Right cardiac atrium (tissue), 5 donors: ENCODE measurements at regions of chr10 and their contacts with region 1.

Region 1: GRCh38 chr10:13717931-13718772 is 131.4 kb downstream of the PRPF18 start:
- DNase-seq: peak; percentile 83 to 93 (median 92)
- ATAC-seq: peak; percentile 80 to 88
- H3K4me3 ChIP-seq: no peak overlapping the region
- H3K27ac ChIP-seq: peak overlapping the region; percentile 28
- H3K4me1 ChIP-seq: peaks cover 8% of the 10 kb centered on the region
- H3K27me3 ChIP-seq: no peaks in the 10 kb centered on the region

Region 2: GRCh38 chr10:13769955-13770354 is 51.8 kb after region 1 on chr10:
- intact Hi-C with region 1: loop called in 1 of 4 experiments (anchors 5 kb)
- DNase-seq: no peak
- ATAC-seq: no peak
- H3K4me3 ChIP-seq: no peak overlapping the region
- H3K27ac ChIP-seq: no peak overlapping the region
- H3K4me1 ChIP-seq: peaks cover 6% of the 10 kb centered on the region
- H3K27me3 ChIP-seq: no peaks in the 10 kb centered on the region